B cell (primary cell): ENCODE measurements at regions of chr1 and their contacts with region 1.

Region 1: GRCh38 chr1:175192630-175193526 is at the start of gene KIAA0040:
- DNase-seq: peak; percentile 84
- ATAC-seq: peak; percentile 61
- H3K4me3 ChIP-seq: peak within 1 kb of the TSS; percentile 71 to 99 (median 97)
- H3K4me3 Mint-ChIP-seq: peak within 1 kb of the TSS; percentile 99
- H3K27ac ChIP-seq: peak within 1 kb of the TSS; percentile 69 to 81
- H3K27ac Mint-ChIP-seq: peak within 1 kb of the TSS; percentile 96
- H3K4me1 ChIP-seq: peaks cover 81 to 87% of the 10 kb centered on the region in 2 donors
- H3K4me1 Mint-ChIP-seq: peaks cover 88% of the 10 kb centered on the region
- H3K27me3 ChIP-seq: no peaks in the 10 kb centered on the region
- H3K27me3 Mint-ChIP-seq: no peaks in the 10 kb centered on the region
- CTCF ChIP-seq: no peak
- total RNA-seq, gene KIAA0040: 84.2 and 93.6 TPM in 2 replicates

Region 2: DNA sequence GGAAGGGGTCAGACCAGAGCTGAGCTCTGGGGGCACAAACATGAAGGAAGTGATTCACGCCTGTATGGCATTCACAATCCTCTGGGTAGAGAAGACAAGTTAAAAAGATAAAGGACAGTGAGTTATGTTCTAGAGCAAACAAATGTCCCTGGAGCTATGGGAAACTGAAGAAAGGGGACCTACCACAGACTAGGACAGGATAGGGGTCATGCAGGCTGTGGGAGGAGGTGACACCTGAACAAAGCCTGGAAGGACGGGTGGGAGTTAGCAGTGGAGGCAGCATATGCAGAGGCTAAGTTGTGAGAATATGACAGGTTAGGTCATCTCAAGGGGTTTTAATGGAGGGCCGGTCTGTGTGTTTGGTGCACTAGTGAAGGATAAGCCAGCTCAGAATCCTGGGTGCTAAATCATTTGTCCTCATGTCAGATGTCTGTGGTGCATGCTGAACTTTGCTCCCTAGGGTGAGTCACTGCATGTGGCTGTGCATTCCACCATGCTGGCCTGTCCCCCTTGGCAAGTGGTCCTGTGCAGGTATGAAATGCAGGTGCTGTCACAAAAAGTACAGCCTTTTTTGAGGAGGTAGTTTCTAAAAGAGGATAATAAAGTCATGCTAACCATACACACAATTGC is 96.8 kb before region 1 on chr1:
- CTCF ChIA-PET with region 1: no interaction called
- POLR2A ChIA-PET with region 1: no interaction called
- intact Hi-C with region 1: no loop called
- DNase-seq: no peak
- ATAC-seq: no peak
- H3K4me3 ChIP-seq: no peak overlapping the region
- H3K4me3 Mint-ChIP-seq: no peak overlapping the region
- H3K27ac ChIP-seq: no peak overlapping the region
- H3K27ac Mint-ChIP-seq: no peak overlapping the region
- H3K4me1 ChIP-seq: no peaks in the 10 kb centered on the region
- H3K4me1 Mint-ChIP-seq: no peaks in the 10 kb centered on the region
- H3K27me3 ChIP-seq: no peaks in the 10 kb centered on the region
- H3K27me3 Mint-ChIP-seq: peaks cover 11% of the 10 kb centered on the region
- CTCF ChIP-seq: no peak

Region 3: DNA sequence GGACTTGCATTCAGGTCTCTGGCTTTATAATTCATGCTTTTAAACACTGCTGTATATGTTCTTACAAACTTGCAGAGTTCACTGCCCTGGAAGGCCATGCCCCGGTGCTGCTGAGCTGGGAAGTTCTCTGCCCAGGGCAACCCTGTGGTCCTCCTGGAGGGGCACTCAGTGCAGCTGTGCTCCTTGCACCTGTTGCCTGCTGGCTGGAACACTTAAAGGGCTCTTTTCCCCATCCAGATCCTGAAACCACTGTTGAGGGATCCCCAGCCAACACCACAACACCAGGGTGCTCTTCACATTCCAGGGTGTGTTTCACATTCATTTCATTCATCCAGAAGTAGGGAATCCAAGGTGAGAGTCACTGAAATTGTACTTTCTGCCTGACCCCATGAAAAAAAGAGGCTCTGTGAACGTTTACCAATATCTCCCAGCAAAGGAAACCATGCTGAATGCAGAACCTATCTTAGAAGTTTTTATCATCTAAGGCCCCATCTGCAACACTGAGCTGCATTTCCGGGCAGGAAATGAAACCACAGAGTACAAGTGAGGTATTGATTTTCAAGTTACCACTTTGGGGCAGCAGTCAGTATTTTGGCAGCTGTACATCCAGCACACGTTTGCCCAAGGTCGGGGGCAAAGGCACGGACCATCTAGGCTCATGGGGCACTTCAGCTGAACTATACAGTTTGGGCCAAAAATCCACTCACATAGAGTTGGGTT is 16.1 kb after region 1 on chr1:
- CTCF ChIA-PET with region 1: interaction called, 39 read pairs
- POLR2A ChIA-PET with region 1: interaction called, 15 read pairs
- intact Hi-C with region 1: loop called (anchors 1 kb)
- DNase-seq: peak; percentile 75
- ATAC-seq: peak; percentile 92
- H3K4me3 ChIP-seq: peak overlapping the region in 2 of 5 experiments; percentile 5 to 47
- H3K4me3 Mint-ChIP-seq: peak overlapping the region; percentile 86
- H3K27ac ChIP-seq: peak overlapping the region; percentile 86 to 88
- H3K27ac Mint-ChIP-seq: peak overlapping the region; percentile 99
- H3K4me1 ChIP-seq: peaks cover 45 to 60% of the 10 kb centered on the region in 2 donors
- H3K4me1 Mint-ChIP-seq: peaks cover 69% of the 10 kb centered on the region
- H3K27me3 ChIP-seq: no peaks in the 10 kb centered on the region
- H3K27me3 Mint-ChIP-seq: no peaks in the 10 kb centered on the region
- CTCF ChIP-seq: no peak

Region 4: GRCh38 chr1:175216444-175216843 is 23.6 kb after region 1 on chr1:
- CTCF ChIA-PET with region 1: interaction called, 11 read pairs
- POLR2A ChIA-PET with region 1: interaction called, 3 read pairs
- intact Hi-C with region 1: no loop called
- DNase-seq: no peak
- ATAC-seq: no peak
- H3K4me3 ChIP-seq: no peak overlapping the region
- H3K4me3 Mint-ChIP-seq: no peak overlapping the region
- H3K27ac ChIP-seq: no peak overlapping the region
- H3K27ac Mint-ChIP-seq: no peak overlapping the region
- H3K4me1 ChIP-seq: peaks cover 35 to 39% of the 10 kb centered on the region in 2 donors
- H3K4me1 Mint-ChIP-seq: peaks cover 45% of the 10 kb centered on the region
- H3K27me3 ChIP-seq: no peaks in the 10 kb centered on the region
- H3K27me3 Mint-ChIP-seq: no peaks in the 10 kb centered on the region
- CTCF ChIP-seq: no peak

Region 5: DNA sequence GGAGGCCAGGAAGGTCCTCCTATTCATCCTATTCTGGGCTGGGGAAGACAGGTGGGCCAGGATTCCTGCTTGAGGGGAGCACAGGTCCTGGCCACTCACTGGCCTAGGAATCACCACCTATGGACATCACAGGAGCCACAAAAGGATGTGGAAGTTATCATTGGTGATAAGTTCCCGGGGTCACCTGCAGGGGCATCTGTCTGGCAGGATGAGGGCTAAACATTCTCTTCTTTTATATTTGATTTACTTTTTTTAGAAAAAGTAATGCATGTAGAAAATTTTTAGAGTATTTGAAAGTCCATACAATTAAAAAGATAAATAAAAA is 32.9 kb after region 1 on chr1:
- CTCF ChIA-PET with region 1: interaction called, 14 read pairs
- POLR2A ChIA-PET with region 1: interaction called, 6 read pairs
- intact Hi-C with region 1: loop called (anchors 1 kb)
- DNase-seq: no peak
- ATAC-seq: peak; percentile 22
- H3K4me3 ChIP-seq: no peak overlapping the region
- H3K4me3 Mint-ChIP-seq: peak overlapping the region; percentile 74
- H3K27ac ChIP-seq: peak overlapping the region; percentile 82 to 86
- H3K27ac Mint-ChIP-seq: peak overlapping the region; percentile 95
- H3K4me1 ChIP-seq: peaks cover 62 to 65% of the 10 kb centered on the region in 2 donors
- H3K4me1 Mint-ChIP-seq: peaks cover 81% of the 10 kb centered on the region
- H3K27me3 ChIP-seq: no peaks in the 10 kb centered on the region
- H3K27me3 Mint-ChIP-seq: no peaks in the 10 kb centered on the region
- CTCF ChIP-seq: peak; percentile 57

Region 6: DNA sequence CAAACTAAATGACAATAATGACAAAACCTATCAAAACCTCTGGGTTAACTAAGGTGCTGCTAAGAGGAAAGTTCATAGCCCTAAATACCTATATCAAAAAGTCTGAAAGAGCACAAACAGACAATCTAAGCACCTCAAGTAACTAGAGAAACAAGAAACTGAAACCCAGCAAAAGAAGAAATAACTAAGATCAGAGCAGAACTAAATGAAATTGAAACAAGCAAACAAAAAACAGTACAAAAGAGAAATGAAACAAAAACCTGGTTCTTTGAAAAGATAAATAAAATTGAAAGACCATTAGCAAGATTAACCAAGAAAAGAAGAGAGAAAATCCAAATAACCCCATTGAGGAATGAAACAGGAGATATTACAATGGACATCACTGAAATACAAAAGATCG is 44.5 kb after region 1 on chr1:
- CTCF ChIA-PET with region 1: interaction called, 3 read pairs
- POLR2A ChIA-PET with region 1: no interaction called
- intact Hi-C with region 1: loop called (anchors 2 kb)
- DNase-seq: peak; percentile 50
- ATAC-seq: peak; percentile 66
- H3K4me3 ChIP-seq: no peak overlapping the region
- H3K4me3 Mint-ChIP-seq: peak overlapping the region; percentile 49
- H3K27ac ChIP-seq: peak overlapping the region; percentile 27 to 51
- H3K27ac Mint-ChIP-seq: peak overlapping the region; percentile 83
- H3K4me1 ChIP-seq: peaks cover 52 to 54% of the 10 kb centered on the region in 2 donors
- H3K4me1 Mint-ChIP-seq: peaks cover 69% of the 10 kb centered on the region
- H3K27me3 ChIP-seq: no peaks in the 10 kb centered on the region
- H3K27me3 Mint-ChIP-seq: no peaks in the 10 kb centered on the region
- CTCF ChIP-seq: no peak

Region 7: GRCh38 chr1:176206961-176207902 is 1014.4 kb after region 1 on chr1 and contains the start of gene COP1:
- CTCF ChIA-PET with region 1: no interaction called
- POLR2A ChIA-PET with region 1: no interaction called
- intact Hi-C with region 1: loop called (anchors 5 kb)
- DNase-seq: peak; percentile 99
- ATAC-seq: peak; percentile 84
- H3K4me3 ChIP-seq: peak within 1 kb of the TSS; percentile 92 to 97 (median 94)
- H3K4me3 Mint-ChIP-seq: peak within 1 kb of the TSS; percentile 95
- H3K27ac ChIP-seq: peak within 1 kb of the TSS; percentile 93 to 94
- H3K27ac Mint-ChIP-seq: peak within 1 kb of the TSS; percentile 100
- H3K4me1 ChIP-seq: peaks cover 35 to 42% of the 10 kb centered on the region in 2 donors
- H3K4me1 Mint-ChIP-seq: peaks cover 47% of the 10 kb centered on the region
- H3K27me3 ChIP-seq: no peaks in the 10 kb centered on the region
- H3K27me3 Mint-ChIP-seq: no peaks in the 10 kb centered on the region
- CTCF ChIP-seq: peak; percentile 35
- total RNA-seq, gene COP1: 68.5 and 71.8 TPM in 2 replicates

Region 8: GRCh38 chr1:176416777-176417176 is 1223.9 kb after region 1 on chr1:
- CTCF ChIA-PET with region 1: no interaction called
- POLR2A ChIA-PET with region 1: no interaction called
- intact Hi-C with region 1: no loop called
- DNase-seq: no peak
- ATAC-seq: no peak
- H3K4me3 ChIP-seq: no peak overlapping the region
- H3K4me3 Mint-ChIP-seq: no peak overlapping the region
- H3K27ac ChIP-seq: no peak overlapping the region
- H3K27ac Mint-ChIP-seq: no peak overlapping the region
- H3K4me1 ChIP-seq: no peaks in the 10 kb centered on the region
- H3K4me1 Mint-ChIP-seq: no peaks in the 10 kb centered on the region
- H3K27me3 ChIP-seq: no peaks in the 10 kb centered on the region
- H3K27me3 Mint-ChIP-seq: peaks cover 10% of the 10 kb centered on the region
- CTCF ChIP-seq: no peak